HepG2 (cell line): ENCODE measurements at regions of chr12 and their contacts with region 1.

Region 1: DNA sequence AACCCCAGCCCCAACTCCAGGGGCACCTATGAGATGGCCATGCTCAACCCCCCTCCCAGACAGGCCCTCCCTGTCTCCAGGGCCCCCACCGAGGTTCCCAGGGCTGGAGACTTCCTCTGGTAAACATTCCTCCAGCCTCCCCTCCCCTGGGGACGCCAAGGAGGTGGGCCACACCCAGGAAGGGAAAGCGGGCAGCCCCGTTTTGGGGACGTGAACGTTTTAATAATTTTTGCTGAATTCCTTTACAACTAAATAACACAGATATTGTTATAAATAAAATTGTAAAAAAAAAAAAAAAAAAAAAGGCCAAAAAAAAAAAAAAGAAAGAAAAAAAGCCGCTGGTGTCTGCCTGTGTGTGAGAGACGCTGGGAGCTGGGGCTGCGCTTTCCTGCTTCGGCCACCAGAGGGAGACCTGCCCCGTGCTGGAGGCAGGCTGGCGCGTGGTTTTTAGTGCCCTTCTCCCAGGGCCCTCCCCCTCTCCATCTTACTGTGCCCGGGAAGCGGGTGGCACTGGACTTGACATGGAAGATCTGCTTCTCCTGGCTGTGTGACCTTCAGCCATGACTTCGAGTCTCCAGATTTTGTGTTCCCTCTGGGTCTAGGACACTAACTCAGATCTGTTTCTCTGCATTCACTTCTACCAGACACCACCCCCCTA is 3.4 kb upstream of the NXPH4 start:
- DNase-seq: peak; percentile 53
- ATAC-seq: peak; percentile 42
- H3K4me3 ChIP-seq: no peak overlapping the region
- H3K27ac ChIP-seq: no peak overlapping the region
- H3K4me1 ChIP-seq: peaks cover 37% of the 10 kb centered on the region
- H3K27me3 ChIP-seq: peaks cover 9 to 33% of the 10 kb centered on the region in 2 experiments
- CTCF ChIP-seq: peak; percentile 84
- EP300 ChIP-seq: no peak
- POLR2A ChIP-seq: no peak
- RAD21 ChIP-seq: peak; percentile 66

Region 2: DNA sequence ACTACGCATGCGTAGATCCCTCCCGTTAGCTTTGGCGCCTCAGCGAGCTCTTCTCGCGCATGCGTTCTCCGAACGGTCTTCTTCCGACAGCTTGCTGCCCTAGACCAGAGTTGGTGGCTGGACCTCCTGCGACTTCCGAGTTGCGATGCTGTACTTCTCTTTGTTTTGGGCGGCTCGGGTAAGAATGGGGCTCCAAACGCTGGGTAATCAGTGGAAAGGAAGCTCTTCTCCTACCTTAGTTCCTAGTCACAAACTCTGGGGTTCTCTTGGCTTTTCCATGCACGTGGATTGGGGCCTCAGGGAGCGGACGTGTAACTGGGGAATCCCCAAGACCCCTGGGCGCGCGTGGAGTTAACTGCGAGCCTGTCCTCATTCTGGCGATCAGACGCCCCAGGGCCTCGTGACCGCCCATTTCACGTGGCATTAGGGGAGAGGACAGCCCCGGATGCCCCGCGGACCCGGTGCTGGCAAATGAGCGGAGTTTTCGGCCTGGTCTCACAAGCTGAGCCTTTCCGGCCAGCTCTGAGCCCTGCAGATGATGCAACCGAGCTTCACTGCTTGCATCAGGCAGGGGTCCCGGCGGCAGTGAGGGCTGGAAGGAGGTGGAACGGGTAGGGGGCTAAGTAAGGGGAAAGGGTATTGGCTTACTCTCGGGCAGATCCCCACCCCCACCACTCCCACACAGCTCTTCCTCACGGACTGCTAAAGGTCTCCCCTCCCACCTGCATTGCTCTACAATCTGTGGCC is 16.6 kb after region 1 on chr12 and contains the start of gene SHMT2:
- CTCF ChIA-PET with region 1: interaction called, 308 read pairs
- POLR2A ChIA-PET with region 1: interaction called, 14 read pairs
- in situ Hi-C with region 1: no loop called
- intact Hi-C with region 1: no loop called
- DNase-seq: peak; percentile 95
- ATAC-seq: peak; percentile 73
- H3K4me3 ChIP-seq: peak within 1 kb of the TSS; percentile 71 to 82 (median 75)
- H3K27ac ChIP-seq: peak within 1 kb of the TSS; percentile 95
- H3K4me1 ChIP-seq: peaks cover 81% of the 10 kb centered on the region
- H3K27me3 ChIP-seq: peaks cover 0 to 21% of the 10 kb centered on the region in 2 experiments; a peak in 4 of 5 replicates
- CTCF ChIP-seq: no peak; the same call in 1 of the 2 replicates
- EP300 ChIP-seq: no peak
- POLR2A ChIP-seq: peak in 1 of 2 experiments; percentile 68; a peak in 2 of 4 replicates
- RAD21 ChIP-seq: no peak
- total RNA-seq, gene SHMT2: 181 and 184 TPM in 2 replicates

Region 3: GRCh38 chr12:57238854-57239554 is 25.8 kb after region 1 on chr12:
- CTCF ChIA-PET with region 1: interaction called, 308 read pairs
- POLR2A ChIA-PET with region 1: interaction called, 8 read pairs
- in situ Hi-C with region 1: no loop called
- intact Hi-C with region 1: loop called (anchors 1 kb)
- DNase-seq: peak; percentile 68
- ATAC-seq: peak; percentile 51
- H3K4me3 ChIP-seq: peak overlapping the region; percentile 66 to 83 (median 67)
- H3K27ac ChIP-seq: no peak overlapping the region
- H3K4me1 ChIP-seq: peaks cover 79% of the 10 kb centered on the region
- H3K27me3 ChIP-seq: peaks cover 18 to 44% of the 10 kb centered on the region in 2 experiments
- CTCF ChIP-seq: peak; percentile 100
- EP300 ChIP-seq: no peak
- POLR2A ChIP-seq: no peak
- RAD21 ChIP-seq: peak; percentile 98